ENCODE measurements at regions of chr10 and their contacts with region 1.

Region 1: DNA sequence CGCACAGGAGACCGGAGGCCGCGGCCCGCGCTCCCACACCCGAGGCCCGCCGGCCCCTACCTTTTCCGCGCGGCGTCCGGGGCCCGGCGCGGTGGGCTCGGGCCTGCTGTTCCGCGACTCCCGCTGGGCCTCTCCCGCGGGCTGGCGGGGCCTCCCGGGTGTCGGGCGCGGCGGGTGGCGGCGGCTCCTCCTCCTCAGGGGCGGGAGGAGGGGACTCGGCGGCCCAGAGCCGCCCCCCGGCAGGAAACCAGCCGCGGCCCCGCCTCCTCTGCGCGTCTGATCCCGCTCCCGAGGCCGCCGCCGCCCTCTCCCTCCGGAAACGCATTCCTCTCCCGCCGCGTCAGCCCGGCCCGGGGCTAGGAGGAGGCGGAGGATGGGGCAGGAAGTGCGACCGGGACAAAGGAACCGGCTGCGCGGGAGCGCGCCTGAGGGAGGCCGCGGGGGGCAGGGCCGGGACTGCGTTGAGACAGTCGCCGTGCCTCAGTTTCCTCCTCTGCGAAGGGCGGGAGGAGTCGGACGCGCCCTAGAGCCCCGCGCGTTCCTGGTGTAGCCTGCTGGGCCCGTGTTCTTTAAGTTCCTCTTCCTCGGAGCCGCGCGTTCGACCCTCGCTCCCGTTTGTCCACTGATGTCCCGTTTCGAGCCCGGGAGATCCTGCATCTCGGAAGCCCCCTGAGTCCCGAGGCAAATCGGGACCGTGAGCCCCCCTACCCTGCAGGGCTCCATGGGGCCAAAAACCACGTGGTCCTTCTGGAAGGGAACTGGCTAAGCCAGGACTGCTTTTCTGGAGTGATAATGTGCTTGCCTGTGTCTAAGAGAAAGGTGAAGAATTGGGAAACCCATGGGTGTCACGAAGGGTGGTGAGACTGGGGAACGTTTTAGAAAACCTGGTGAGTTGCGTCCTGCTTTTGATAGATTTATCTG is at the start of gene ITGB1:
- DNase-seq: peak; percentile 94 to 96
- ATAC-seq: peak; percentile 87 to 90
- H3K4me3 ChIP-seq: peak within 1 kb of the TSS; percentile 72 to 96 (median 76)
- H3K27ac ChIP-seq: peak within 1 kb of the TSS; percentile 93 to 98 (median 96)
- H3K4me1 ChIP-seq: peaks cover 53 to 64% of the 10 kb centered on the region in 2 donors
- H3K27me3 ChIP-seq: no peaks in the 10 kb centered on the region
- CTCF ChIP-seq: no peak
- POLR2A ChIP-seq: peak; percentile 94 to 97
- total RNA-seq, gene ITGB1: 242 to 379 (median 368) TPM

Region 2: GRCh38 chr10:32445740-32446535 is 512.4 kb before region 1 on chr10 and contains the start of gene CCDC7:
- in situ Hi-C with region 1: no loop called
- intact Hi-C with region 1: loop called (anchors 5 kb)
- DNase-seq: peak; percentile 57 to 76
- ATAC-seq: peak; percentile 93 to 95
- H3K4me3 ChIP-seq: peak within 1 kb of the TSS; percentile 67 to 99 (median 80)
- H3K27ac ChIP-seq: peak within 1 kb of the TSS; percentile 84 to 99 (median 90)
- H3K4me1 ChIP-seq: peaks cover 9 to 11% of the 10 kb centered on the region in 2 donors
- H3K27me3 ChIP-seq: no peaks in the 10 kb centered on the region
- CTCF ChIP-seq: peak; percentile 31 to 64 (median 38)
- POLR2A ChIP-seq: peak; percentile 54 to 67
- total RNA-seq, gene CCDC7: 4.6 to 12.9 (median 5.9) TPM

Region 3: DNA sequence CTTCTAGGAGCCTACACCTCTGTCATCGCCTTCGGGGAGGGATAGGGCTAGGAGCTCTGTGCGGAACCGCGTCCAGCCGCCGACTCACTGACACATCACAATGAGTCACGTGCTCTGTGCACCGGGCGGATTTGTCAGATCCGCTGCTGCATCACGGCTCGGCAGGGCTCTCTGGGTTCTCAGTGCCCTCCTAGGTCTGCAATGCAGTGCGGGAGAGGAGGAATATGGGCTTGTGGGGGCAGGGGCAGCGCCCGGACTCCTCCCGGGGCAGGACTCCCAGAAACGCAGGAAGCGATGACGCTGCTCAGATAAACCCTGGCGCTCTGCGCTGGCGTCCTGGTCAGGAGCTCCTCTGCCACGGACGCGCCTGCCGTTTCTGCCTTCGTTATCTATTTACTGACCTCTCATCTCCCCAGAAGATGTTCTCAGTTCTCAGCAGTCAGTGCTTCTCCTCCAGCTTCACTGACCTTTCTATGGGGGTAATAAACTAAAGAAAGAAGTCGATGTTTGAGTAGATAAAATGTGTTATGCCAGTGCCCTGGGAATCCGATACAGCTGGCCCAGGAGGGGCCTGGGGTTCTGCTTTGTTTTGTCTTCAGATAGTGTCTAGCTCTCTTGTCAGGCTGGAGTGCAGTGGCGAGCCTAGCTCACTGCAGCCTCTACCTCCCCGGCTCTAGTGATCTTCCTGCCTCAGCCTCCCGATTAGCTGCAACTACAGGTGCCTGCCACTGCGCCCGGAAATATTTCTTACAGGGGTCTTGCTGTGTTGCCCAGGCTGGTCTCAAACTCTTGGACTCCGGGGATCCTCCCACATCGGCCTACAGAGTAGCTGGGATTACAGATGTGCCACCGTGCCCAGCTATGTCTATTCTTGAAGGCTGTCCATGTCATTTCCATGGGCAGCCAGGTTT is 22.5 kb after region 1 on chr10:
- in situ Hi-C with region 1: no loop called
- intact Hi-C with region 1: loop called (anchors 1 kb)
- DNase-seq: peak; percentile 72 to 87
- ATAC-seq: peak; percentile 92 to 96
- H3K4me3 ChIP-seq: peak overlapping the region; percentile 59 to 66 (median 63)
- H3K27ac ChIP-seq: peak overlapping the region; percentile 84 to 91 (median 88)
- H3K4me1 ChIP-seq: peaks cover 4 to 5% of the 10 kb centered on the region in 2 donors
- H3K27me3 ChIP-seq: no peaks in the 10 kb centered on the region
- CTCF ChIP-seq: no peak
- POLR2A ChIP-seq: peak; percentile 75 to 80

Measured in gastrocnemius medialis (tissue), 4 donors.